ENCODE measurements at regions of chr17 and their contacts with region 1.

Region 1: GRCh38 chr17:27630607-27631410 is at the start of gene LGALS9:
- DNase-seq: peak; percentile 37
- H3K4me3 Mint-ChIP-seq: peak within 1 kb of the TSS; percentile 89
- H3K27ac Mint-ChIP-seq: peak within 1 kb of the TSS; percentile 91
- H3K4me1 Mint-ChIP-seq: peaks cover 54% of the 10 kb centered on the region
- H3K27me3 Mint-ChIP-seq: no peaks in the 10 kb centered on the region
- total RNA-seq, gene LGALS9: 38.4 and 39.7 TPM in 2 replicates

Region 2: DNA sequence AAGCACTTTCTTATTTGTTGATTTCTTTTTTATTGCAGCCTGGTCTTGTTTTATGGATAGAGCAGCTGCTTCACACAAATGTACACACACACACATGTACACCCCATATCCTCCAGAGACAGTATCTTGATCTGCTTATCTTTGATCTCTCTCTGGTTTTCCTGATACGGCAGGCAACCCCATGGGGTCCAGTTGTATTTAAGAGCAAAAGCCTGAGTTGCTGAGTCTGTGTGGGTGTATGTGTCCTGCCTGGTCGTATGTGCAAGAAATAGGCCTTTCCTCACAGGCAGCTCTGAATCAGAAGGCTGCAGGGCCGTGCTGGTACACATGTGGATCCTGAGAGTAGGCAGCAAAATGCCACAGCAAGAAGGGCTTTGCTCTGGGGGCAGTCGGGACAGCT is 14.4 kb before region 1 on chr17:
- intact Hi-C with region 1: loop called (anchors 1 kb)
- DNase-seq: no peak
- H3K4me3 Mint-ChIP-seq: peak overlapping the region; percentile 48
- H3K27ac Mint-ChIP-seq: peak overlapping the region; percentile 81
- H3K4me1 Mint-ChIP-seq: peaks cover 50% of the 10 kb centered on the region
- H3K27me3 Mint-ChIP-seq: no peaks in the 10 kb centered on the region

Measured in activated T-helper 1 cell treated with anti-CD3 and anti-CD28 coated beads, Interleukin-12 subunit alpha, Interleukin-12 subunit beta, Interleukin-2, Interleukin-4 antibody, amounts not matched to agents 30 ng/mL and 10 ng/mL and 1 ng/mL, durations not matched to agents 14 hours and 24 hours and 36 hours (primary cell).